ENCODE measurements at regions of chr1 and their contacts with region 1.

Region 1: DNA sequence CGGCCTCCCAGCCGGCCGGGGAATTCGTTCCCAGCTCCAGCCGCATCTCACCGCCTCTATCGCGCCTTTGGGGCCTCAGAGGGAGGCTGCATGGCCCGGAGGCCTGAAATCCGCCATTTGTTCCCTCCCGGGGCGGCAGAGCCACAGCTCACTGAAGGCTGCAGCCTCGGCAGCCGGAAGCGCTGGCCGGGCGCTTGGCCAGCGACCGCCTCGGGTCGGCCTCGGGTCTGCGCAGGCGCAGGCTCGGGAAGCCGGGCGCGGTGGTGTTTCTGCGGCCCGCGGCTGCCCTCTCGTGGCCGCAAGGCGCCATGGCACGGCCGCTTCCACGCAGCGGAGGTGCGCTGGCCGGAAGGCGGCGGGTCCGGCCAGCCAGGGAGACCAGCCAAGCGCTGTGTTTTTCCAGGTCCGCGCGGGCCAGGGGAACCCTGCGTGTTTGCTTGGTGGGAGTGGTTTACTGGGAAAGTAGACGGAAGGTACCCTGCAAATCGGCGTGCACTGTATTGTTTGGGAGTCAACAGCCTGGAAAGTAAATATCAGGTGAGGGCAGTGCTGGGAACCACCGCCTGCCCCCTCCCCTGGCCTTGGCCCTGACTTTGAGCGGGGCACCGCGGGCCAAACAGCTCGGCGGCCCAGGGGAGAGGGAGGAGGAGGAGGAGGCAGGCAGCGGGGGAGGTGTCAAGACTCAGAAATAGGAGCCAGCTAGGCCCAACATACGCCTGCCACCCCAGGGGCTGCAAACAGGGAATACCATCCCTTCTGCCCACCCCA is 52.7 kb upstream of the CD34 start:
- DNase-seq: peak; percentile 96
- ATAC-seq: peak; percentile 85

Region 2: GRCh38 chr1:207828485-207829158 is 135.0 kb before region 1 on chr1:
- intact Hi-C with region 1: loop called (anchors 10 kb)
- DNase-seq: peak; percentile 86
- ATAC-seq: peak; percentile 44

Region 3: DNA sequence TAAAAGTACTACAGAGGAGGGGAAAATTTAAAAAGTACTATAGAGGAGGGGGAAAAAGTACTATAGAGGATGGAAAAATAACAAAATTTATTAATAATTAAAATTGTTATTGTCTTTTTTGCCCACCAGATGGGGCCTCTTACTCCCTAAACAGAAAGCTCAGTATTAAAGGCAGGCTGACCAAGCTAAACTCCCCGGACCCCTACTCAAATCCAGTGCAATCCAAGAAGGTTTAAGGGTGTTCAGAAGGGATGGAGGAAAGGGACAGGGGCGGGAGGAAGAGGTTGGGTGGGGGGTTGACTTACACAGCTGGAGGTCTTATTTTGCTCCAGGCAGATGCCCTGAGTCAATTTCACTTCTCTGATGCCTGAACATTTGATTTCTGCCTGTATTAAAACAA is 66.4 kb before region 1 on chr1:
- intact Hi-C with region 1: loop called (anchors 2 kb)
- DNase-seq: no peak
- ATAC-seq: no peak

Region 4: GRCh38 chr1:207908107-207908734 is 55.4 kb before region 1 on chr1:
- intact Hi-C with region 1: loop called (anchors 5 kb)
- DNase-seq: peak; percentile 68
- ATAC-seq: peak; percentile 60

Measured in Right ventricle myocardium superior (tissue), 1 donor.